Naive thymus-derived CD4-positive, alpha-beta T cell (primary cell): ENCODE measurements at regions of chr17 and their contacts with region 1.

Region 1: GRCh38 chr17:61904094-61904710 is 23.6 kb downstream of the INTS2 start:
- DNase-seq: peak in 7 of 9 donors; percentile 10 to 39 (median 29)
- ATAC-seq: peak; percentile 72
- H3K4me3 ChIP-seq: peak overlapping the region; percentile 8
- H3K4me3 Mint-ChIP-seq: peak overlapping the region in 9 of 10 donors; percentile 17 to 65 (median 52)
- H3K27ac ChIP-seq: peak overlapping the region; percentile 48
- H3K27ac Mint-ChIP-seq: peak overlapping the region; percentile 46 to 90 (median 78)
- H3K4me1 ChIP-seq: peaks cover 0 to 11% of the 10 kb centered on the region in 2 donors
- H3K4me1 Mint-ChIP-seq: peaks cover 0 to 8% (median 4%) of the 10 kb centered on the region in 7 donors
- H3K27me3 ChIP-seq: no peaks in the 10 kb centered on the region
- H3K27me3 Mint-ChIP-seq: no peaks in the 10 kb centered on the region

Region 2: DNA sequence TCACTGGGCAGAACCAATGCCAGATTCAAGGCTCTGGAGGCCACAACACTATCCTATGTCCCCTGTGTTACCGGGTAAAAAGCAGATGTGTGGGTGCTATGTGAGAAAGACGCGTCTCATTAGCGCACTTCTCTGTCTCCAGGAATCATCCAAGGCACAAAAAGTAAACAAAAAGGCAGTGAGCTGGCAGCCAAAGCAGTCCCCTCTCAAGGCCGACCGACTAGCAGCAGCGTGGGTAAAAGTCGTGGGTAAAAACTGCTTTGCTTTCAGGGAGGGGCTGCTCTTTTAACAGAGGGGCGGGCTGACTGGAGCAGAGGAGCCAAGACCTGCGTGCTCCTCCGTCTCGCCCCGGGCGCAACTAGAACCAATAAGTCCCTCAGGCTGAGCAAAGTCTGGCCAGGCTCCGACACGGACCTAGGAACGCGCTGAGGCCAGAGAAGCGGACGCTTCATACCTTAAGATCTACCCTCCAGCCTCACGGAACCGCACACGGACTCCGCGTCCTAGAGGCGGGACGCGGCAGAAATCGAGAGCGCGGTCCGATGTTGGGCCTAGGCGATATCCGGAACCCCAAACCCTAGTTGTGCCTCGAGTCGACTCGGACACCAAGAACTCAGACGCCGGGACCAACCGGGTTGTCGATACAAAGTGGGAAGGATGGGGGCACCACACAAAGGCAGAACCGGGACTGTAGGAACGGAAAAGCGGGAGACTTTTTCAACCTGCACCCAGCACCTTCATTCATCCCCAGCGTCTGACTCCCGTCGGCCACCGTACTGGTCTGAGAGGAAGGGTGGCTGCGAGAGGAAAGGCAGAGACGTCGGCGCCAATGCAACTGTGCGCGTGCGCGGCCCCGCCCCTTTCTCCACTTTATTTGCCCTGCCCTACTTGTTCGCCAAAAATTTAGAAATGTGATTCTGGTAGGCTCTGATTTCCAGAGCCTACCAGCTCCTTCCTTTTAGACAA is 23.3 kb after region 1 on chr17 and contains the start of gene INTS2:
- CTCF ChIA-PET with region 1: no interaction called
- POLR2A ChIA-PET with region 1: interaction called, 5 read pairs
- intact Hi-C with region 1: loop called in 1 of 2 experiments (anchors 1 kb)
- DNase-seq: peak; percentile 90 to 96 (median 94)
- ATAC-seq: peak; percentile 95
- H3K4me3 ChIP-seq: peak within 1 kb of the TSS; percentile 98
- H3K4me3 Mint-ChIP-seq: peak within 1 kb of the TSS; percentile 88 to 96 (median 92)
- H3K27ac ChIP-seq: peak within 1 kb of the TSS; percentile 80
- H3K27ac Mint-ChIP-seq: peak within 1 kb of the TSS; percentile 90 to 98 (median 94)
- H3K4me1 ChIP-seq: peaks cover 11 to 19% of the 10 kb centered on the region in 2 donors
- H3K4me1 Mint-ChIP-seq: peaks cover 13 to 28% (median 21%) of the 10 kb centered on the region in 7 donors
- H3K27me3 ChIP-seq: no peaks in the 10 kb centered on the region
- H3K27me3 Mint-ChIP-seq: peaks cover 0 to 3% (median 0%) of the 10 kb centered on the region in 5 donors
- total RNA-seq, gene INTS2: 14.9 to 24.4 (median 19.2) TPM

Region 3: GRCh38 chr17:61946359-61946758 is 42.2 kb after region 1 on chr17:
- CTCF ChIA-PET with region 1: no interaction called
- POLR2A ChIA-PET with region 1: no interaction called
- intact Hi-C with region 1: no loop called
- DNase-seq: no peak
- ATAC-seq: no peak
- H3K4me3 ChIP-seq: no peak overlapping the region
- H3K4me3 Mint-ChIP-seq: no peak overlapping the region
- H3K27ac ChIP-seq: no peak overlapping the region
- H3K27ac Mint-ChIP-seq: peak overlapping the region in 2 of 9 donors; percentile 20 to 52
- H3K4me1 ChIP-seq: no peaks in the 10 kb centered on the region
- H3K4me1 Mint-ChIP-seq: peaks cover 0 to 5% (median 0%) of the 10 kb centered on the region in 7 donors
- H3K27me3 ChIP-seq: no peaks in the 10 kb centered on the region
- H3K27me3 Mint-ChIP-seq: no peaks in the 10 kb centered on the region

Region 4: DNA sequence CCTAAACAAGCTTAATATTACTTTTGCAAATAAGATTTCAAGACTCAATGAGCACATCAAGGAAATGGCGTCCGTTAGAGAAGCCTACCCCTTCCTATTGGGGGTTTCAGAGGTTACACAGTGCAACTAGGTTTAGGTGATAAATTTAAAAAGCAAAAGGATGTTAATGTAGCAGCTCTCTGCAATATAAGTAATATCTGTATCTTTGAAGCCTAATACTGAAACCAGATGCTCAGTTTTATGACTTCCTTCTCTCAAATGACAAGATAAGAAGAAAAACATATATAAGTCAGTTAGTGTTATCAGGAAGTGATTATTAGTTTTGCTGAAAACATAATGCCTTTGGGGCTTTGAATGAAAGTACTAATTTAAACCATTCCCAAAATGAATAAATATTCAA is 215.2 kb after region 1 on chr17:
- CTCF ChIA-PET with region 1: no interaction called
- POLR2A ChIA-PET with region 1: no interaction called
- intact Hi-C with region 1: no loop called
- DNase-seq: no peak
- ATAC-seq: no peak
- H3K4me3 ChIP-seq: no peak overlapping the region
- H3K4me3 Mint-ChIP-seq: no peak overlapping the region
- H3K27ac ChIP-seq: no peak overlapping the region
- H3K27ac Mint-ChIP-seq: no peak overlapping the region
- H3K4me1 ChIP-seq: no peaks in the 10 kb centered on the region
- H3K4me1 Mint-ChIP-seq: peaks cover 0 to 9% (median 7%) of the 10 kb centered on the region in 7 donors
- H3K27me3 ChIP-seq: no peaks in the 10 kb centered on the region
- H3K27me3 Mint-ChIP-seq: peaks cover 0 to 9% (median 5%) of the 10 kb centered on the region in 5 donors

Region 5: DNA sequence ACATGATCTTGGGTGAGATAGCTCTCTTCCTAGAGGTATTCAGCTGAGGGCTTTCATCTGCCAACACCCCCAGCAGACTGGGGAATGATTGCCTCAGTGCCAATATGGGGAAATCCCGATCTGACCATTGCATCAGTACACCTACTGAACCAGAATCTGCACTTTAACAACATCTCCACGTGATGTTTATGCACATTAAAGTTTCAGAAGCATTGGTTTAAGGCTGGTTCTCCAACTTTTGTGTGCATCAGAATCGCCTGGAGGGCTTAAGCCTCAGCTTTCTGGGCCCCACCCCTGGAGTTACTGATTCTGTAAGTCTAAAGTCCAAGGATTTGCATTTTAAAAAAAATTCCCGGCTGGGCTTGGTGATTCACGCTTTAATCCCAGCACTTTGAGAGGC is 284.5 kb after region 1 on chr17:
- CTCF ChIA-PET with region 1: no interaction called
- POLR2A ChIA-PET with region 1: no interaction called
- intact Hi-C with region 1: no loop called
- DNase-seq: no peak
- ATAC-seq: no peak
- H3K4me3 ChIP-seq: no peak overlapping the region
- H3K4me3 Mint-ChIP-seq: no peak overlapping the region
- H3K27ac ChIP-seq: no peak overlapping the region
- H3K27ac Mint-ChIP-seq: no peak overlapping the region
- H3K4me1 ChIP-seq: no peaks in the 10 kb centered on the region
- H3K4me1 Mint-ChIP-seq: no peaks in the 10 kb centered on the region
- H3K27me3 ChIP-seq: no peaks in the 10 kb centered on the region
- H3K27me3 Mint-ChIP-seq: peaks cover 0 to 4% (median 0%) of the 10 kb centered on the region in 5 donors